ENCODE measurements at regions of chr13 and their contacts with region 1.

Region 1: GRCh38 chr13:95403828-95404522 is 102.7 kb upstream of the ABCC4 start:
- DNase-seq: peak; percentile 88
- CTCF ChIP-seq: peak; percentile 93

Region 2: DNA sequence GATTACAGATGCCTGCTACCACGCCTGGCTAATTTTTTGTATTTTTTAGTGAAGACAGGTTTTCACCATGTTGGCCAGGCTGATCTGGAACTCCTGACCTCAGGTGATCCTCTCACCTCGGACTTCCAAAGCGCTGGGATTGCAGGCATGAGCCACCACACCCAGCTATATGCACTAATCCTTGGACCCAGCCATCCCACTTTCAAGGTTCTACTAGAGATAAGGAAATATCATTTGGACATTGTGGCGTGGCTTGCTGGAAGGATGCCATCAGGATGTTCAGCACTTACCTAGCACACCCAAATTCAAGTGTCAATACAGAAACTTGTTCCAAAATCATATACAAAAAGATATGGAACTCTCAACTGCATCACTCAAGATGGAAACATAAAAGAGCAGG is 239.1 kb before region 1 on chr13:
- CTCF ChIA-PET with region 1: interaction called, 15 read pairs
- POLR2A ChIA-PET with region 1: no interaction called
- DNase-seq: no peak
- CTCF ChIP-seq: no peak

Region 3: GRCh38 chr13:95201814-95202651 is 201.9 kb before region 1 on chr13:
- CTCF ChIA-PET with region 1: interaction called, 663 read pairs
- POLR2A ChIA-PET with region 1: no interaction called
- DNase-seq: no peak
- CTCF ChIP-seq: no peak

Region 4: DNA sequence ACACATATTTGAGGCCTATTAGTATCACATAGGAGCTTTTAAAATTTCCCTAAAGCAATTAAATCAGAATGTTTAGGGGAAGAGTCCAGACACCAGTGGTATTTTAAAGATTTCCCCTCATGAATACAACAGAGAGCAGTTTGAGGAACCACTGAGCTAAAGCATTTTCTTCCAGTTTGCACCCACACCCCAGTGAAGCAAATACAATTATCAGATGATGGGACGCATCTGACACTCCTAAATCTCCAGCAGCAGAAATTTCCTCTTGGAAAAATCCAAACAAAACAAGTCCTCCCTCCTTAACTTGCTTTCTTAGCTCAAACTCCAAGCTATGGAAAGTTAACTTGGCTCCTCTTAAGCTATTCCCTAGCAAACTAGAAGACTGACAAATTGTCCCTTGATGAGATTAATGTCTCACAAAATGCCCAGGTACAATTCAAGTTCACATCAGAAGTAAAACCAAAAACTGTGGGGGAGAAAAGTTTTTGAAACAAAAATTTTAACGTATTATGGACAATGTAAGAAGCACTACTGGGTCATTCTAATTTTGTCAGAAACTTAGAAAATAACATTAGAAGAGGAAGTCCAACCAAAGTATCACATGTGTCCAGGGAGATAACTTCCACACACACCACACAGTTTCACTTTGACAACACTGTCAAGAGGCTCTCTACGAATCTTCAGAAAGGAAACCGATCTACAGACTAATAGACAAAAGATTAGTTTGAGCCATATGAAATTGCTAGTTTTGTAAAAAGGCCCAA is 176.9 kb before region 1 on chr13:
- CTCF ChIA-PET with region 1: interaction called, 18 read pairs
- POLR2A ChIA-PET with region 1: no interaction called
- DNase-seq: peak; percentile 69
- CTCF ChIP-seq: no peak

Region 5: DNA sequence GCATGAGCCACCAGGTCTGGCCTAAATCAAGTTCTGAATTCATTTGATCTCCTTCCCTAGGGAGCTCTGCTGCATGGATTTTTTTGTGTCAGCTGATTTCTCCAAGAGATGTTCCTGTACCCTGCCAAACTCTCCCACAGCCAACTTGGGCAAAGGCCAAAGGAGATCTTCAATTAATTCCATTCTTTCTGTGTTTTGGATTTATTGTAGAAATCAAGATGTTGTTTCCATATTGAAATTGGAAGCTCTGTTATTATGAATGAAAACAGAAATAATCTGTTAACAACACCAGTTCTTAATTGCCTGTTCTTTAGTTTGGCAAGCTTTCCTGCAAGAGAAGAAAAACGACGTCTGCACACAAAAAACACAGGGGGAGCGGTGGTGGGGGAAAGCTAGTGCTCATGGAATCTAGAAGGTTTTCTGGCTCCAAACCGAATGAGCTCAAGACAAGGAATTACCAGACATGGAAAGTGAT is 16.2 kb before region 1 on chr13:
- CTCF ChIA-PET with region 1: interaction called, 96 read pairs
- POLR2A ChIA-PET with region 1: no interaction called
- DNase-seq: no peak
- CTCF ChIP-seq: no peak

Region 6: GRCh38 chr13:95432141-95432540 is 28.2 kb after region 1 on chr13:
- CTCF ChIA-PET with region 1: interaction called, 12 read pairs
- POLR2A ChIA-PET with region 1: no interaction called
- DNase-seq: no peak
- CTCF ChIP-seq: no peak

Region 7: DNA sequence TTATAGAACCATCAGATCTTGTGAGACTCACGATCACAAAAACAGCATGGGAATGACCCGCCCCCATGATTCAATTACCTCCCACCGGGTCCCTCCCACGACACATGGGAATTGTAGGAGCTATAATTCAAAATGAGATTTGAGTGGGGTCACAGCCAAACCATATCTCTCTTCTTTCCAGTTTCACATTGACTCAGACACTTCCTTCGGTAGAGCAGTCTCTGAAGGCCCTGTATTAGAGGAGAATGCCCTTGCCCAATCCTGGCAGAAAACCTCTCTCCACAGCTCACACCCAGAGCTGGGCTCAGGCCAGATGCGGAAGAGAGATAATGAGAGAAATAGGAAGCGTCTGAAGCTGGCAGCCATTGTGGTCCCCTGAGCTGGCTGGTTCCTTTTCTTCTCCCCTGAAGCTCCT is 76.2 kb after region 1 on chr13:
- CTCF ChIA-PET with region 1: interaction called, 37 read pairs
- POLR2A ChIA-PET with region 1: no interaction called
- DNase-seq: peak; percentile 10
- CTCF ChIP-seq: no peak

Region 8: GRCh38 chr13:95547531-95548167 is 143.7 kb after region 1 on chr13:
- CTCF ChIA-PET with region 1: no interaction called
- POLR2A ChIA-PET with region 1: no interaction called
- DNase-seq: no peak
- CTCF ChIP-seq: no peak

Region 9: DNA sequence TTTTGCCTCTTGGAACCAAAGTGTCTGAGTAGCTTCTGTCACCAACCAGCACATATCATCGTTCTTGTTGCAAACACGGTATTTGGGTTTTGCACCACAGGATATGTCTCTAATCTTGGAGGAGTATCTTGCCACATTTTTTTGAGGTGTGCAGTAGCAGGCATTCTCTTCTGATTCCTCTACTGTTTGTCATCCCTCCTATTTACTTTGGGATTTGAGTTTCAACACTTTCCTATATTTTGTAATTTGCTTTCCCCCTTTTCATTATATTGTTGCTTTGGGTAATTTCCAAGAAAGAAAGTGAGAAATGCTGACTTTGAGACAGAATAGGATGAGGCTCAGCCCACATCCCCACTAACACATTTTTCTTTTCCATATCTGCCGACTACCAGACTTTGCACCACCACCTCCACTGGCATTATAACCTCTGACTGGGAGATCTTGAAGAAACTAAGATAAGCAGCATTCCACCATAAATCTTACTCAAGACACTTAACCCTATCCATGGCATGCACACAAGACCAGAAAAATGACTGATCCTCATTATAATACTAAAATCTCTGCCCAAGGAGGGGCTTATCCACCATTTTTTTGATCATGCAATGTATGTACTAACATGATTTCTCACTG is 252.5 kb after region 1 on chr13:
- CTCF ChIA-PET with region 1: no interaction called
- POLR2A ChIA-PET with region 1: no interaction called
- DNase-seq: no peak
- CTCF ChIP-seq: no peak

Measured in GM10248 (cell line).